PC-3 (cell line): ENCODE measurements at regions of chr1 and their contacts with region 1.

Region 1: DNA sequence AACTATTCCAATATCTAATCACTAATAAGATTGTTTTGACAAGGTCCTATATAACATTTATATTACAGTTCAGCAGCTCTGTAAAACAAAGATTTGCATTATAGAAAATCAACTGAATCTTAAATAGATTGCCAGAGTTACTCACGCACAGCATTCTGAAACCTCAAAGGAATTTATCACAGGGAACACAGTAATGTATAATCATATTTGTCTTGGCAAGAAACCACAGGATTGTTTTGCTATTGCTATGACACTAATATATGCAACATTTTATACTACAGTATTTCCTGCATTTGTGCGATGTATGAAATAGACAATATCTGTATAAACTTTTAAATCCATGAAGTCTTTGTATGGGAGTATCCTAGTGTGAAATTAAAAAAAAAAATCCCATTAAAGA is 101.4 kb downstream of the PLPPR5 start:
- DNase-seq: peak; percentile 95
- ATAC-seq: peak; percentile 88
- H3K4me3 ChIP-seq: peak overlapping the region; percentile 41; the same call in 1 of the 2 replicates
- H3K27ac ChIP-seq: peak overlapping the region; percentile 85
- H3K4me1 ChIP-seq: peaks cover 57% of the 10 kb centered on the region
- H3K27me3 ChIP-seq: no peaks in the 10 kb centered on the region
- CTCF ChIP-seq: no peak

Region 2: DNA sequence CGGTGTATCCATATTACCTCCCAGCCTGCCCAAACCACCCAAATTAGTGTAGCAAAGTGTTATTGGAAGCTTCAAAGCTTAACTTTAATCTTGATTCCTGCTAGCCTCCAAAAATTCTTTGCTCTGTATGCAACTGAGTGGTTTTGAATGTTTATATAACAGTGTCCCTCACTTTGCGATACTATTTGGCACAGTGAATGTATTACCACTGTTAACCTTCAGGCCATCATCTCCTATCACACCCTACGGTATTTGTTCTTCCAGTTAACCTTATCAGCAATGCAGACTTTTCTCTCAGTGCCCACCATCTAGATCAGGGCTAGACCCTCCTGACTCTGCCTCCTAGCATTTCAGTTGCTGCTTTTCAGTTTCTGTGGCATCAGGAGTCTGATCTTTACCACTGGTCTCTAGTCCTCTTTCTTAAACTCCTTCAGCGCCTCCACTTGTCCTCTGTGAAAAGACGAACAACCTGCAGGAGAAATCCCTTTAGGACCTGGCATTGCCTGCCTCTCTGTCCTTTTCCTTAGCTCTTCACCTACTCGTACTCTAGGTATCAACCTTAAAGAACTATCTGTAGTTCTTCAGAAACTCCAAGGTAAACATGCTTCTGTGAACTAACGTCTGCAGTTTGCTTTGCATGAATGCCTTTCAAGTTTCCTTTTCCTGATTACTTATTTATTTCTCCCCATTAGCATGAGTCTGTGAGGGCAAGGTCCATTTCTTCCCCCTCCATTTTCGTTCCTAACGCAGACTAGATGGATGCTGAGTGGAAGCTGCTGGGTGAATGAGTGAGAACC is 170.1 kb before region 1 on chr1:
- CTCF ChIA-PET with region 1: no interaction called
- POLR2A ChIA-PET with region 1: no interaction called
- intact Hi-C with region 1: no loop called
- DNase-seq: no peak
- ATAC-seq: no peak
- H3K4me3 ChIP-seq: no peak overlapping the region
- H3K27ac ChIP-seq: no peak overlapping the region
- H3K4me1 ChIP-seq: no peaks in the 10 kb centered on the region
- H3K27me3 ChIP-seq: no peaks in the 10 kb centered on the region
- CTCF ChIP-seq: no peak

Region 3: GRCh38 chr1:98981917-98982513 is 78.8 kb after region 1 on chr1:
- CTCF ChIA-PET with region 1: no interaction called
- POLR2A ChIA-PET with region 1: no interaction called
- intact Hi-C with region 1: loop called (anchors 5 kb)
- DNase-seq: peak; percentile 89
- ATAC-seq: peak; percentile 87
- H3K4me3 ChIP-seq: no peak overlapping the region
- H3K27ac ChIP-seq: peak overlapping the region; percentile 76
- H3K4me1 ChIP-seq: peaks cover 22% of the 10 kb centered on the region
- H3K27me3 ChIP-seq: no peaks in the 10 kb centered on the region
- CTCF ChIP-seq: no peak